ENCODE measurements at regions of chr12 and their contacts with region 1.

Region 1: GRCh38 chr12:123972457-123973401 is at the starts of genes CCDC92 and ZNF664:
- DNase-seq: peak; percentile 95
- H3K4me3 ChIP-seq: peak within 1 kb of the TSS; percentile 97 to 99 (median 97)
- H3K27ac ChIP-seq: peak within 1 kb of the TSS; percentile 96 to 99 (median 98)
- H3K4me1 ChIP-seq: peaks cover 15 to 54% (median 39%) of the 10 kb centered on the region in 4 donors
- H3K27me3 ChIP-seq: no peaks in the 10 kb centered on the region
- CTCF ChIP-seq: no peak
- EP300 ChIP-seq: no peak
- POLR2A ChIP-seq: no peak
- total RNA-seq, gene CCDC92: 42.2 to 66.3 (median 54.1) TPM
- total RNA-seq, gene ZNF664: 58.5 to 76.4 (median 70.3) TPM

Region 2: DNA sequence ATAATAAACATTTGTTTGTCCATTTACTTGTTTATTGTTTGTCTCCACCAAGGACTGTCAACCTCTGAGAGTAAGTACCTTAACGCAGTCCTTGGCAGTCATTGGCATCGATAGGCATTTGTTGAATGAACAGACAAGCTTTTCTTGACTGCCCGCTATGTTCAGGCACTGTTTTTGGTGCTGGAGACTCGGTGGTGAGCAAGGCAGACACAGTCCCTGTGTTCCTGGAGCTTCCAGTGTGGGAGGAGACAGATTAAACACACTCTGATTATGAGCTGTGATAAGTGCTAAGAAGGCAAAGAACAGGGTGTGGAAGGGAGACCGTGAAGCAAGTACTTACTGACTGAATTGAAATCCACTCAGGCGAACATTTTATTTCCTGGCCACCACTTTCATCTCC is 259.3 kb before region 1 on chr12:
- intact Hi-C with region 1: loop called (anchors 10 kb)
- DNase-seq: no peak
- H3K4me3 ChIP-seq: peak overlapping the region; percentile 87 to 100 (median 96)
- H3K27ac ChIP-seq: peak overlapping the region in 1 of 4 donors; percentile 70
- H3K4me1 ChIP-seq: peaks cover 23 to 37% (median 29%) of the 10 kb centered on the region in 4 donors
- H3K27me3 ChIP-seq: no peaks in the 10 kb centered on the region
- CTCF ChIP-seq: no peak
- EP300 ChIP-seq: no peak
- POLR2A ChIP-seq: no peak

Region 3: GRCh38 chr12:124036674-124037109 is 64.0 kb after region 1 on chr12:
- intact Hi-C with region 1: no loop called
- DNase-seq: no peak
- H3K4me3 ChIP-seq: no peak overlapping the region
- H3K27ac ChIP-seq: no peak overlapping the region
- H3K4me1 ChIP-seq: peaks cover 0 to 5% (median 0%) of the 10 kb centered on the region in 4 donors
- H3K27me3 ChIP-seq: no peaks in the 10 kb centered on the region
- CTCF ChIP-seq: peak; percentile 91 to 94 (median 93)
- EP300 ChIP-seq: no peak
- POLR2A ChIP-seq: no peak

Region 4: GRCh38 chr12:124338436-124338835 is 365.7 kb after region 1 on chr12:
- intact Hi-C with region 1: no loop called
- DNase-seq: no peak
- H3K4me3 ChIP-seq: no peak overlapping the region
- H3K27ac ChIP-seq: no peak overlapping the region
- H3K4me1 ChIP-seq: no peaks in the 10 kb centered on the region
- H3K27me3 ChIP-seq: no peaks in the 10 kb centered on the region
- CTCF ChIP-seq: no peak
- EP300 ChIP-seq: no peak
- POLR2A ChIP-seq: no peak

Region 5: DNA sequence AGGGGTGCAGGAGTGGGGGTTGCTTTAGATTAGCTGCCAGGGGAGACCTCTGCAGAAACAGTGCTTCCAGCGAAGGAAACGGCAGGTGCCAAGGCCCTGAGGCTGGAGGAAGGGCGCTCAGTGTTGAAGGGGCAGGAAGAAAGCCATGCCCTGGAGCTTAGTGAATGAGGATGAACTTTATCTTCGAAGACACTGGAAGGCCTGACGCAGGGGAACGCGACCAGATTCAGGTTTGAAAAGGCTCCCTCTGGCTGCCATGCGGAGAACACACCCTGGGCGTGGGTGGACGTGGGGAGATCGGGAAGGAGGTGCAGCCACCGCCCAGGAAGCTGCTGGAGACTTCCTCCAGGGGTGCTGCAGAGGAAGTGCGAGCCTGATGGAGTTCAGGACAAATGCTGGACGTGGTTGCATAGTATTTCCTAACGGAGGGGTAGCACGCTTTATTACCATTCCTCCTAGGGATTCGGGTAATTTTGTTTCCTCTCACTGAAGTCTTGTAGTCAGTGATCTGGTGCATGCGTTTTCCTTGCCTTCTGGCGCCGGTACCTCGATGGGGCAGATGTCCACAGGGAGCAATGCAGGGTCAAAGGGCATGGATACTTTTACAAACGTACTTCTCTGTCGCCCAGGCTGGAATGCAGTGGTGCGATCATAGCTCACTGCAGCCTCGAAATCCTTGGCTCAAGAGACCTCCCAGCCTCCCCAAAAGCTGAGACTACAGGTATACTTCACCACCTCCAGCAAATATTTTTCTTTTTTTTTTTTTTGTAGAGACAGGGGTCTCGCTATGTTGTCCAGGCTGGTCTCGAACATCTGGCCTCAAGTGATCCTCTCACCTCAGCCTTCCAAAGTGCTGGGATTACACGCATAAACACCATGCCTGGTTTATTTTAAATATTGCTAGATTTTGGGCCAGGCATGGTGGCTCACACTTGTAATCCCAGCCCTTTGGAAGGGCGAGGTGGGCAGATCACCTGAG is 968.1 kb after region 1 on chr12:
- intact Hi-C with region 1: loop called (anchors 10 kb)
- DNase-seq: peak; percentile 98
- H3K4me3 ChIP-seq: peak overlapping the region; percentile 53 to 67 (median 56)
- H3K27ac ChIP-seq: peak overlapping the region; percentile 89 to 98 (median 92)
- H3K4me1 ChIP-seq: peaks cover 32 to 40% (median 38%) of the 10 kb centered on the region in 4 donors
- H3K27me3 ChIP-seq: no peaks in the 10 kb centered on the region
- CTCF ChIP-seq: peak; percentile 96 to 98 (median 96)
- EP300 ChIP-seq: no peak
- POLR2A ChIP-seq: no peak

Measured in esophagus muscularis mucosa (tissue), 4 donors.